H1 (cell line): ENCODE measurements at regions of chr3 and their contacts with region 1.

Region 1: GRCh38 chr3:2978977-2979732 is 131.0 kb downstream of the IL5RA start:
- DNase-seq: peak; percentile 25 to 54
- H3K4me3 ChIP-seq: peak overlapping the region in 2 of 4 experiments; percentile 11 to 22; a peak in 3 of 8 replicates
- H3K27ac ChIP-seq: no peak overlapping the region
- H3K4me1 ChIP-seq: peaks cover 2 to 8% (median 8%) of the 10 kb centered on the region in 4 experiments; a peak in 5 of 7 replicates
- H3K27me3 ChIP-seq: no peaks in the 10 kb centered on the region; a peak in 1 of 7 replicates
- CTCF ChIP-seq: no peak
- EP300 ChIP-seq: no peak
- POLR2A ChIP-seq: no peak
- RAD21 ChIP-seq: no peak

Region 2: GRCh38 chr3:2948882-2949281 is 30.3 kb before region 1 on chr3:
- CTCF ChIA-PET with region 1: interaction called, 13 read pairs
- POLR2A ChIA-PET with region 1: no interaction called
- DNase-seq: no peak
- H3K4me3 ChIP-seq: no peak overlapping the region
- H3K27ac ChIP-seq: no peak overlapping the region
- H3K4me1 ChIP-seq: no peaks in the 10 kb centered on the region
- H3K27me3 ChIP-seq: no peaks in the 10 kb centered on the region
- CTCF ChIP-seq: no peak
- EP300 ChIP-seq: no peak
- POLR2A ChIP-seq: no peak
- RAD21 ChIP-seq: no peak

Region 3: GRCh38 chr3:2958551-2958950 is 20.6 kb before region 1 on chr3:
- CTCF ChIA-PET with region 1: interaction called, 10 read pairs
- POLR2A ChIA-PET with region 1: no interaction called
- DNase-seq: no peak
- H3K4me3 ChIP-seq: no peak overlapping the region
- H3K27ac ChIP-seq: no peak overlapping the region
- H3K4me1 ChIP-seq: peaks cover 2 to 6% (median 4%) of the 10 kb centered on the region in 4 experiments; a peak in 6 of 7 replicates
- H3K27me3 ChIP-seq: no peaks in the 10 kb centered on the region
- CTCF ChIP-seq: no peak
- EP300 ChIP-seq: no peak
- POLR2A ChIP-seq: no peak
- RAD21 ChIP-seq: no peak

Region 4: DNA sequence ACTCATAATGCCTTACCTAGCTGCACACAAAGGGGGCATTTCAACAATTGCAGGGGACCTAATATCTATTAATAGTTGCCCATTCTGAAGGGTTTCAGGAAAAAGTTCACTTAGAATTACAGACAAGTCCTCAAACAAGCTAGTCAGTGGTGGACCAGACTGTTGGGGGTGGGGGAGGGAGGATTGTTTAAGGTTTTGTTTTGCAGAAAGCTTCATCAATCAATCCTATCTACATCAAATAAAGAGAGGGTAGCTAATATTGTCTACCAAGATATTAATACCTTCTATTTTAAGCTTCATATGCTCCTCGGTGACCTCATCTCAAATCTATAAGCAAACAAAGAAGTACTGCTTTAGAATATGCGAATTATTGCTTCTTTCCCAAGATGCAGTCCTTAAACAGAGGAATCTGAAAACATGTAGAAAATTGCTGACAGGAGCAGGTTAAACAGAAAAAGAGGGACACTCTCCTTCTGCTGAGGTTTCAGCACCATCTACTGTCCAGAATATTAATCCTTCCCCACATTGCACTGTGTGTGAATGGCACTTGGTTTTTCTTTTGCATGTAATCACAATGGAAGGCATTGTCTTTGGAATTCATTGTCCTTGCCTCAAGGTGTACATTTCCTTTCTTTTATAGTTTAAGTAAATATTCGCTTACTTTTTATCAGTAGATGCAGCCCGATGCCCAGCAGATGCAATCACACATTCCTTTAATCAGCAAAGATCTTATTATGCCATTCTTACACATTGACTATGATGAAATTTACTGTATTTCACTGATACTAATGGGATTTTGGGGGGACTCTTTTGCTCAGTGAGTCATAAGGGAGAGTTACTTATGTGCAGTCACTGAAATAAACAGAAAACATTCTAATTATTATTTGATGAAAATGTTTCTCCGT is 36.3 kb after region 1 on chr3:
- CTCF ChIA-PET with region 1: interaction called, 13 read pairs
- POLR2A ChIA-PET with region 1: no interaction called
- DNase-seq: no peak
- H3K4me3 ChIP-seq: peak overlapping the region in 1 of 4 experiments; percentile 14; a peak in 1 of 8 replicates
- H3K27ac ChIP-seq: no peak overlapping the region
- H3K4me1 ChIP-seq: peaks cover 0 to 15% (median 8%) of the 10 kb centered on the region in 4 experiments; a peak in 5 of 7 replicates
- H3K27me3 ChIP-seq: no peaks in the 10 kb centered on the region
- CTCF ChIP-seq: peak in 2 of 3 experiments; percentile 33 to 61; a peak in 2 of 4 replicates
- EP300 ChIP-seq: no peak
- POLR2A ChIP-seq: no peak
- RAD21 ChIP-seq: peak; percentile 88 to 91

Region 5: DNA sequence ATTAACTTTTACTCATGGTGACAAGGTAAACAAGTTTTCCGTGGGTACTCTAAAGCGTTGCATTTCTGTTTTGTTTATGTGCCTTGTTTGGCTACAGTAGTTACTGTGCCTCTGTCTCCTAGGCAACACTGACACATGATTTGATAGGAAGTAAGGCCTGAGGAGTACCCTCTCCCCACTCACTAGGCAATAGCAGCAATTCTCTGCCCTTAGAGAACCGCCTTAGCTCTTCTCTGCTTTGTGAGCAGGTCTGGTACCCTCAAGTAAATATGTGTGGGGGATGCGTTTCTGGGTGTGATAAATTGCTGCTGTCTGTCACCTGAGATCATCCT is 131.1 kb after region 1 on chr3 and contains the start of gene IL5RA:
- CTCF ChIA-PET with region 1: no interaction called
- POLR2A ChIA-PET with region 1: no interaction called
- DNase-seq: no peak
- H3K4me3 ChIP-seq: no peak within 1 kb of the TSS
- H3K27ac ChIP-seq: peak within 1 kb of the TSS; percentile 62; the same call in 1 of the 2 replicates
- H3K4me1 ChIP-seq: peaks cover 0 to 6% (median 6%) of the 10 kb centered on the region in 4 experiments; a peak in 5 of 7 replicates
- H3K27me3 ChIP-seq: no peaks in the 10 kb centered on the region
- CTCF ChIP-seq: no peak
- EP300 ChIP-seq: no peak
- POLR2A ChIP-seq: no peak
- RAD21 ChIP-seq: no peak
- total RNA-seq, gene IL5RA: not detected in 2 replicates